ENCODE measurements at regions of chr12 and their contacts with region 1.

Region 1: GRCh38 chr12:132887513-132888351 is at the start of gene CHFR:
- DNase-seq: peak; percentile 95 to 96
- ATAC-seq: peak; percentile 99 to 100 (median 100)
- H3K4me3 ChIP-seq: peak within 1 kb of the TSS; percentile 61 to 97 (median 78)
- H3K27ac ChIP-seq: peak within 1 kb of the TSS; percentile 86 to 99 (median 94)
- H3K4me1 ChIP-seq: peaks cover 0 to 17% (median 8%) of the 10 kb centered on the region in 9 donors
- H3K27me3 ChIP-seq: no peaks in the 10 kb centered on the region
- CTCF ChIP-seq: no peak
- total RNA-seq, gene CHFR: 10.2 to 19.5 (median 15.0) TPM

Region 2: DNA sequence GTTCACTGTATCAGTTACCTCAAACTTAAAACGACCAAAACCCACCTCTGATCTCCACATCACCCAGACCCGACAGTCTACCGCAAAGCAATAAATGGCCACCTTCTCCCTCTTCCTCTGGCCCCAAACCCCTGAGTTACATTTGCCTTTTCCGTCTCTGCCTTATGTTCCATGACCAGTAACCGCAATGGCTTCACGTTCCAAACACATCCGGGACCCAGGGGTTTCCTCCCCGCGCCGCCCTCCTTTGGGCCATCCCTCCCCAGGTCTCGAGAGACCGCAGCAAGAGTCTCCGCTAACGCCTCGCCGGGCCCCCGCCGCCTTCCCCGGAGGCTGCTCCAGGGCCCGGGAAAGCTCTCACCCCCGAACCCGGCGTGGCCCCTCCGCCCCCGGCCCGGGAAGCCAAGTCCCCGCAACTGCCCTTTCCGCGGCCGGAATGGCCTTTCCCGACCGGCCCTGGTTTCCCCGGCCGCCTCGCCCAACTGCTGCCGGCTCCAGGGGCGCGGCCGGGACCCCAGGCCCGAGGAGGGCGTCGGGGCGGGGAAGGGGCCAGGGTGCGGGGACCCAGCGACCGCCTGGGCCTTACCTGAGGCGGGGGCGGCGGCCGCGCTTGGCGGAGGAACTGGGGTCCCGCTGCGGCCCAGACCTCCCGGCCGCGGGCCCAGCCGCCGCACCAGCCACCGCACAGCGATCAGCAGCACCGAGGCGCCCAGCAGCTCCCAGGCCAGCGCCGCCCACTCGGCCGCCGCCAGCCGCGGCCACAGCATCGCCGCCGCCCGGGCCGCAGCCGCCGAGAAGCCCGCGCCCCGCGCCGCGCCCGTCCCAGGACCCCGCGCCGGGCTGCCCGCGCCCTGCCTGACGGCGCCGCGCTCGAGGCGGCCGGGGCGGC is 126.5 kb before region 1 on chr12 and contains the start of gene ANKLE2:
- intact Hi-C with region 1: loop called in 1 of 10 experiments (anchors 10 kb)
- DNase-seq: peak; percentile 46 to 55
- ATAC-seq: peak; percentile 16 to 42 (median 32)
- H3K4me3 ChIP-seq: peak within 1 kb of the TSS; percentile 85 to 98 (median 96)
- H3K27ac ChIP-seq: peak within 1 kb of the TSS; percentile 86 to 100 (median 98)
- H3K4me1 ChIP-seq: peaks cover 2 to 40% (median 29%) of the 10 kb centered on the region in 9 donors
- H3K27me3 ChIP-seq: no peaks in the 10 kb centered on the region
- CTCF ChIP-seq: no peak
- total RNA-seq, gene ANKLE2: 23.5 to 39.4 (median 30.5) TPM

Region 3: DNA sequence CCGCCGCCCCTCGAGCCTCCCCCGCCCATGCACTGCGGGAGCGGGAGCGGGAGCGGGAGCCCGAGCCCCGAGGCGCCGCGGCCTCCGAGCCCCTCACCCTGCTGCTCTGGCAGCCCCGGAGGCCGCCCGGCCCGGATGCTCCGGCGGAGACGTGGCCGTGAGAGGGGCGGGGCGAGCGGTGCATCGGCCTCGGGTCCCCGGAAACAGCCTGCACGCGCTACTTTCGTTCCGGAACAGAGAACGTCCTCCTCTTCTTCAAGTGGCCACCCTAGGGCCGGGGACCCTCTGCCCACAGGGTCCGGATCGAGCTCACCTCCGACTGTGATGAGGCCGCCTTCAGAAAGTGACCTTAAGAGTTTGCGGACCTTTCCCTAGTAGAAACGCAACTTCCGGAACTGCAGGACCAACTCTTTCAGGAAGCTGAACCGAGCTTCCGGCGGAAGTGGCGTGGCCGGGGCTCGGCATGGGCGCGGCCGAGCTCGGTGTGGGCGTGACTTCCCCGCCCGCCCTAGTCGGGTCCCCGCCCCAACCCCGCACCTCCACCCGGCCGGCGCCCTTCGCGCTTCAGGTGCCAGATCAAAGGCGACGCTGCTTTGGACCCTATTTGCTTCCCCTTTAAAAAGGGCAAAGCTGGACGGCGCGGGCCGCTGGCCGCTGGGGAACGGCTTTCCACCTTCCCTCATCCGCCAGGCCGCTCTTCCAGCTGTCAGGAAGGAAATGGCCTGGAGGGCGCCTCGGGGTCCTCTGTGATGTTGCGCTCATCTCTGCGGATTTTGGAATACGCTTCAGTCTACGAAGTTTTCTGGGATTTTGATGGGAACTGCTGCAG is 58.8 kb before region 1 on chr12 and contains the start of gene GOLGA3:
- intact Hi-C with region 1: loop called in 1 of 10 experiments (anchors 2 kb)
- DNase-seq: peak; percentile 93 to 94
- ATAC-seq: peak; percentile 96 to 99 (median 98)
- H3K4me3 ChIP-seq: peak within 1 kb of the TSS; percentile 34 to 98 (median 80)
- H3K27ac ChIP-seq: peak within 1 kb of the TSS; percentile 91 to 99 (median 96)
- H3K4me1 ChIP-seq: peaks cover 0 to 29% (median 22%) of the 10 kb centered on the region in 9 donors
- H3K27me3 ChIP-seq: no peaks in the 10 kb centered on the region
- CTCF ChIP-seq: no peak
- total RNA-seq, gene GOLGA3: 27.7 to 46.1 (median 35.7) TPM

Region 4: GRCh38 chr12:132908145-132909044 is 20.7 kb after region 1 on chr12:
- intact Hi-C with region 1: loop called in 1 of 10 experiments (anchors 1 kb)
- DNase-seq: peak; percentile 96 to 99
- ATAC-seq: peak; percentile 96 to 99 (median 97)
- H3K4me3 ChIP-seq: peak overlapping the region; percentile 50 to 84 (median 63)
- H3K27ac ChIP-seq: peak overlapping the region; percentile 17 to 84 (median 68)
- H3K4me1 ChIP-seq: peaks cover 0 to 26% (median 10%) of the 10 kb centered on the region in 9 donors
- H3K27me3 ChIP-seq: peaks cover 0 to 50% (median 8%) of the 10 kb centered on the region in 7 donors
- CTCF ChIP-seq: no peak

Region 5: GRCh38 chr12:132956011-132956788 is 68.5 kb after region 1 on chr12 and contains the start of gene ZNF605:
- intact Hi-C with region 1: loop called in 2 of 10 experiments (anchors 2 to 5 kb)
- DNase-seq: peak; percentile 91 to 93
- ATAC-seq: peak; percentile 93 to 97 (median 96)
- H3K4me3 ChIP-seq: peak within 1 kb of the TSS; percentile 57 to 95 (median 82)
- H3K27ac ChIP-seq: peak within 1 kb of the TSS; percentile 59 to 98 (median 96)
- H3K4me1 ChIP-seq: peaks cover 0 to 26% (median 17%) of the 10 kb centered on the region in 9 donors
- H3K27me3 ChIP-seq: no peaks in the 10 kb centered on the region
- CTCF ChIP-seq: no peak
- total RNA-seq, gene ZNF605: 9.3 to 14.4 (median 12.3) TPM